ENCODE measurements at regions of chr11 and their contacts with region 1.

Region 1: DNA sequence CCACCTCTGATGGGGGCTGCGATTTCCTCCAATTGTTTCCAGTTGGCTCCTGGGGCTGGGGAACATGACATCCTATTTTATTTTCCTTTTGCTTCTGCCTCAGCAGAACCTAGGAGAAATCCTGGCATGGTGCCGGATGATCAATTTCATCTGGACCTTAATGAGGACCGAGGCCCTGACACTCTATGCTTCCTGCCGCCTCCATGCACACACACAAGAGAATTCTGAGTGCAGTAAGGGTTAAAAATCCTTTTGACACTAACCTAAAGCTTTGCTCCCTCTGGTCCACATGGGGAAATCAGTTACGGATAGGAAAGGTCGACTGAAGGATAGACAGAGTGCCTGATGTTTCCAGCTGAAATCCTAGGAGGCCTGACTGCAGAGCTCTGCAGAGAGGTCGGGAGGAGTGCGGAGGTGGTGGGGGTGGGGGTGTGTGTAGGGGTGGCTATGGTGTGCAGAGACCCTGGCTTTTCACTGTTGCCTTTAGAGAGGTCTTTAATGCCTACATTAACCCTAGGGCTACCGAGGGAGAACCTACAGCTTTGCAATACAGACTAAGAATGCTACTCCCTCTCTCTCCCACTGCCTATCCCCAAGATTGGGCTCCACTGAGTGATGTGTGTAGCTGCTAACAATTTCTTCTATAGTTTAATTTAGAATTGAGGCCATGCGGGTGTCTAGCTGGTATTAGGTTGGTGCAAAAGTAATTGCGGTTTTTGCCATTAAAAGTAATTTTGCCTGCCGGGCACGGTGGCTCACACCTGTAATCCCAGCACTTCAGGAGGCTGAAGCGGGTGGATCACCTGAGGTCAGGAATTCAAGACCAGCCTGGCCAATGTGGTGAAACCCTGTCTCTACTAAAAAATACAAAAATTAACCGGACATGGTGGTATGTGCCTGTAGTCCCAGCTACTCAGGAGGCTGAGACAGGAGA is 53.6 kb upstream of the INCENP start:
- DNase-seq: no peak
- H3K4me3 ChIP-seq: no peak overlapping the region
- CTCF ChIP-seq: no peak

Region 2: DNA sequence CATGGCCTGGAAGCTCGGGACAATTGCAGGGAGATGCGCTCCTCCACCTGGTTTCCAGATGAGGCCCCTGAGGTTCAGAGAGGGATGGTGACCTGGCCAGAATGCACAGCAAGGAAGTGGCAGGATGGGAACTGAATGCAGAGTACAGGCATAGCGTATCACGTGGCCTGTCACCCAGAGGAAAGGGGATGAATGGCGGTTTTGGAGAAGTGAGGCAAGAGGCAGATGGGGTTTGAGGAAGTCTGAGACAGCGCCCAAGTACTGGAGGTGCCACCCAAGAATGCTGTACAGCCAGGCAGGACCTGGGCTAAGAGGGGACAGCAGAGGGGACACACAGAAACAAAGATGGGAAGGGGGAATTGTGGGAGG is 157.7 kb before region 1 on chr11:
- in situ Hi-C with region 1: loop called (anchors 5 kb)
- DNase-seq: no peak
- H3K4me3 ChIP-seq: no peak overlapping the region
- CTCF ChIP-seq: no peak

Region 3: DNA sequence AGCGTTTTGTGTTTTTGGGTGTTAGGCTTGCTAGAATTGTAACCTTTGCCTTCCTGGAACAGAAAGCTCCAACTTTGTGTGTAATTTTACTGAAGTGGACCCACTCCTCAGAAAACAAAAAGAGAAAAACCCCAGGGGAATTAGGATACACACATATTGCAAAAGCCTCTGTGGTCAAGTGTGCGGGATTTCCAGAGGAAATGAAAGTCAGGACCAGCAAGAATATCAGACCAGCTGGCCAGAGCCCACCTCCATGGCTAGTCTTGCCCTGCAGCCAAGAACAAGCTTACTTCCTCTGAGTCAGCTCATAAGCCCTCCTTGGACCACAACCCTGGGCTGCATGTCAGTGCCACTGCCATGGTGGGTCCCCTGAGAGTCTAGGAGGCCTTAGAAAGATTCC is 65.8 kb before region 1 on chr11:
- in situ Hi-C with region 1: loop called (anchors 5 kb)
- DNase-seq: peak; percentile 83
- H3K4me3 ChIP-seq: no peak overlapping the region
- CTCF ChIP-seq: no peak

Region 4: GRCh38 chr11:62143727-62144126 is 73.5 kb after region 1 on chr11:
- in situ Hi-C with region 1: no loop called
- DNase-seq: no peak
- H3K4me3 ChIP-seq: no peak overlapping the region
- CTCF ChIP-seq: peak; percentile 16

Region 5: DNA sequence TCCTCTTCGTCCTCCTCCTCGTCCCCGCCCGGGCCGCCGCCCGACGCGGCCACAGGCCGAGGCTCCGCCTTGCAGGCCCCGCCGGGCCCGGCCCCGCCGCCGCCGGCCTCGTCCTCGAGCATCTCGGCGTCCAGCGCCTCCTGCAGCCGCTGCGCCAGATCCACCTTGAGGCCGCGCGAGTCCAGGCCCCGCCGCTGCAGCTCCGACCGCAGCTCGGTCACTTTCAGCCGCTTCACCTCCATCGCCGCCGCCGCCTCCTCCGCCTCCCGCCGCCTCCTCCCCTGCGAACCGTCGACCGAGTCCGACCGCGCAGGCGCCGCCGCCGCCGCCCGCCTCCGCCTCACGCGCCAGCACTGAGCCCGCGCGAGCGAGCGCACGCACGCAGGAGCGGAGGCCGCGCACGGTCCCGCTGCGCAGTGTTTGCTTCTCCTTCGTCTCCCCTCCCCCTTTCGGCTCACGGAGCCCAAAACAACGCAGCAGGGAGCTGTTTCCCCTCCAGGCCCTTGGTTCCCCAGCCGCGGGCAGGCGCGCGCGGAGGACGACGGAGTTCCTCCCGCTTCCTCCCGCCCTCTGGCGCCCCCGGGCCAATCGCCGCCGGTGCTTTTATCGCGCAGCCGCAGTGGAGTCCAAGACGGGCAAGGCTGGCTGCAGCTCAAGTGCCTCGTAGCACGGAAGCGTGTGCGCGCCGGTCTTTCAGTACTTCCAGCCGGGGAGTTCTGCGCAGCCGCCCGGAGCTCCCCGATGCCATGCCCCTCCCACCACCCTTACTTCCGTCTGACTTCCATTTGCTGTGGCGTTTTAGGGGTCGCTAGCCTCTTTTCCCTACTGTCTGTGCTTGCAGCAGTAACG is 656.9 kb after region 1 on chr11 and contains the start of gene HNRNPUL2:
- in situ Hi-C with region 1: no loop called
- DNase-seq: peak; percentile 99
- H3K4me3 ChIP-seq: peak within 1 kb of the TSS; percentile 94
- CTCF ChIP-seq: no peak